ENCODE measurements at regions of chr1 and their contacts with region 1.

Region 1: GRCh38 chr1:2300851-2301606 is 72.9 kb downstream of the SKI start:
- DNase-seq: peak; percentile 86
- ATAC-seq: peak; percentile 82
- H3K4me3 Mint-ChIP-seq: peak overlapping the region; percentile 85
- H3K27ac Mint-ChIP-seq: peak overlapping the region; percentile 97
- H3K4me1 Mint-ChIP-seq: peaks cover 65% of the 10 kb centered on the region
- H3K27me3 Mint-ChIP-seq: no peaks in the 10 kb centered on the region
- CTCF ChIP-seq: no peak

Region 2: GRCh38 chr1:2194898-2195673 is 105.9 kb before region 1 on chr1:
- CTCF ChIA-PET with region 1: interaction called, 6 read pairs
- POLR2A ChIA-PET with region 1: interaction called, 26 read pairs
- intact Hi-C with region 1: loop called (anchors 1 kb)
- DNase-seq: peak; percentile 87
- ATAC-seq: peak; percentile 77
- H3K4me3 Mint-ChIP-seq: peak overlapping the region; percentile 91
- H3K27ac Mint-ChIP-seq: peak overlapping the region; percentile 96
- H3K4me1 Mint-ChIP-seq: peaks cover 25% of the 10 kb centered on the region
- H3K27me3 Mint-ChIP-seq: no peaks in the 10 kb centered on the region
- CTCF ChIP-seq: peak; percentile 23

Region 3: DNA sequence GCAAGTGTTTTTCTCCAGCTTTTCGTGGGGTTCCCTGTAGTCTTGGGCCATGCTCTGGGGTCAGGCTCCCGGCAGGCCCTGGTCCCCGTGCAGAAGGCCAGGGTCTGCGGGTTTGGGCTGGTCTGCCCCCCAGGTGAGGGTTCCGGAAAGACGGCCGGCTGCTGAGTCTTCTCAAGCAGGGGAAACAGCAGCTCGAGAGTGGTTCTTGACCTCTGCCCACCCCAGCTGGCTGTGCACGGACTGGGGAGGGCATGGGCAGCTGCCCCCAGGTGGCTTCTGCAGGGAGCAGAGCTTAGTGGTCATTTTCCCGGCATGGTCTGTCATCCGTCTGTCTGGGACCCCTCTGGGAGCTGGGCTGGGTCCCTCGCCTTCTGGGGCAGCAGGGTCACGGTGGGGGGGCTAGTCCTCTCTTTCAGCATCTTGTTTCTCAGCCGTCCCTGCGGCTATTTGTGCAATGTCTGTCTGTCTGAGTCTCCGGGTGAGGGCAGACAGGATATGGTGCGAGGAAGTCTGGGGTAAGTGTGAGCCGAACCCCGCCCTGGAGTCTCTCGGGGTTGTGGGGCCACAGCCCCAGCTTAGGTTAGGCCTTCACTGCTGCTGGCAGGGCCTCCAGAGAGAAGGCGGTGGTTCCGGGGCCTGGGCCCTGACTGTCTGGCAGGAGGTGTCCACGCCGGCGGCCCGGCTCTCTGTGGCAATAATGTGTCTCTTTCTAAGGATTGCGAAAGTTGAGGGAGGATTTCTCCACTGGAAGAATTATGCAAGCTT is 66.8 kb before region 1 on chr1:
- CTCF ChIA-PET with region 1: interaction called, 6 read pairs
- POLR2A ChIA-PET with region 1: interaction called, 46 read pairs
- intact Hi-C with region 1: loop called (anchors 1 kb)
- DNase-seq: no peak
- ATAC-seq: peak; percentile 81
- H3K4me3 Mint-ChIP-seq: peak overlapping the region; percentile 76
- H3K27ac Mint-ChIP-seq: peak overlapping the region; percentile 91
- H3K4me1 Mint-ChIP-seq: peaks cover 87% of the 10 kb centered on the region
- H3K27me3 Mint-ChIP-seq: no peaks in the 10 kb centered on the region
- CTCF ChIP-seq: no peak

Region 4: DNA sequence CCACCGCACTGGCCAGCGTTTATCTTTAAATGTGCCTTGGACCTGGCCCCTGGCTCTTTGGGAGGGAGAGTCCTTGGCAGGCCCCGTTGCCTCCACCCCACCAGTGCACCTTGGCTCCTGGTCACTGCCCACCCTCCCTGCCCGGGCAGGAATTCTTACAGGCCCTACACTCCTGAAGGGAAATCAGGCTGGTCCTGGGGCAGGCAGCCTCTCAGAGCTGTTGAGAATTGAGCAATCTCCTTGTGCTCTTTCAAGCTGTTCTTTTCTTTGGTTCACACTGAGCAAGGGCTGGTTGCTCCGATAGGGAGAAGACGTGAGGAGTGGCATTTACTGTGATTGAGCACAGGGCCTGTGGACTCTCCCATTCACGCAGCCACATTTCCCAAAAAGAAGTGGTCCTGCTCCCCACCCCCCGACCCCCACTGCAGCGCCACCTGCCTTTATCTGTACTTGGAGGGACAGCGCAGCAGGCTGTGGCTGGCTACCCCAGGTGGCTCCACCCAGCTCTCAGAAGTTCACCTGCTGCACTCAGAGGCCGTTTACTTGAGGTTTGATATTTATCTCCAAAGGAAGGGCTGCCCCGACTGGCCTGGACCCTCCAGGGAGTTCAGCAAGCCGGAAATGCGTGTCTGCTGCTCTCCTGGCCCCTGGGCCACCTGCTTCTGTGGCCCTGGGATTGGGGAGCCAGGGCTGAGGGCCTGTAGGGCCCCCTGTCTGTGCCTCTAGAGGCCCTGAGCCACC is 25.1 kb before region 1 on chr1:
- CTCF ChIA-PET with region 1: no interaction called
- POLR2A ChIA-PET with region 1: interaction called, 11 read pairs
- intact Hi-C with region 1: no loop called
- DNase-seq: no peak
- ATAC-seq: peak; percentile 62
- H3K4me3 Mint-ChIP-seq: peak overlapping the region; percentile 19
- H3K27ac Mint-ChIP-seq: no peak overlapping the region
- H3K4me1 Mint-ChIP-seq: peaks cover 73% of the 10 kb centered on the region
- H3K27me3 Mint-ChIP-seq: no peaks in the 10 kb centered on the region
- CTCF ChIP-seq: no peak

Region 5: GRCh38 chr1:2381741-2382620 is 81.0 kb after region 1 on chr1:
- CTCF ChIA-PET with region 1: interaction called, 6 read pairs
- POLR2A ChIA-PET with region 1: interaction called, 12 read pairs
- intact Hi-C with region 1: loop called (anchors 1 kb)
- DNase-seq: peak; percentile 74
- ATAC-seq: peak; percentile 85
- H3K4me3 Mint-ChIP-seq: no peak overlapping the region
- H3K27ac Mint-ChIP-seq: no peak overlapping the region
- H3K4me1 Mint-ChIP-seq: peaks cover 25% of the 10 kb centered on the region
- H3K27me3 Mint-ChIP-seq: no peaks in the 10 kb centered on the region
- CTCF ChIP-seq: peak; percentile 31